Lower leg skin (tissue), 4 donors: ENCODE measurements at regions of chr5 and their contacts with region 1.

Region 1: GRCh38 chr5:133981714-133982113 is 13.3 kb upstream of the C5orf15 start:
- DNase-seq: no peak
- H3K4me3 ChIP-seq: no peak overlapping the region
- CTCF ChIP-seq: no peak
- POLR2A ChIP-seq: no peak

Region 2: GRCh38 chr5:133111299-133111698 is 870.4 kb before region 1 on chr5:
- intact Hi-C with region 1: loop called (anchors 10 kb)
- DNase-seq: peak; percentile 83 to 95
- H3K4me3 ChIP-seq: no peak overlapping the region
- CTCF ChIP-seq: peak in 1 of 3 donors; percentile 89
- POLR2A ChIP-seq: no peak

Region 3: DNA sequence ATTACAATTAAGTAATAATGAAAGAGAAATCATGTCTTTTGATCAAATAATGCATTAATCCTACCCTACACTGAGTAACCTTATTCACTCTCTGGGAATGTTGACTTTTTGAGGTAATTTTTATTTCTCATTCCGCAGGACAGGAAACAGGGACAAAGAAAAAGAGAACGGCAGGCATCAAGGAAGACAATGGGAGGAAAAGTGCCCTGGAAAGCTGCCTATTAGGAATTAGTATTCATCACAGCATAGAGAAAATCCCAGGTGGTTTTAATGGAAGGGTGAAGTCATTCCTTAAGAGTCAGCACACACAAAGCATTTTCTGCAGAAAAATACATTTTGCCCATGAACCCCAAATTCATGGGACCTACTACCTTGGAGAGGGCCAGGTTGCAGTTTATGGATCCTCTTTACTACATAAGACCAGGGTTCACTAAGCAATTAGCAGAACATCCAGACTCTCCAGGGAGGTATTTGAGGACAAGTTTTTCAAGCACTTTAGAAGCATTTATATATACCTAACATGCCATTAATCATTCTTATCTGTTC is 378.8 kb before region 1 on chr5:
- intact Hi-C with region 1: no loop called
- DNase-seq: no peak
- H3K4me3 ChIP-seq: no peak overlapping the region
- CTCF ChIP-seq: no peak
- POLR2A ChIP-seq: no peak